Sigmoid colon (tissue), 7 donors: ENCODE measurements at regions of chr1 and their contacts with region 1.

Region 1: GRCh38 chr1:186212544-186213226 is 162.4 kb downstream of the TPR start:
- DNase-seq: peak; percentile 69
- H3K4me3 ChIP-seq: no peak overlapping the region
- H3K27ac ChIP-seq: no peak overlapping the region
- H3K4me1 ChIP-seq: peaks cover 0 to 13% (median 4%) of the 10 kb centered on the region in 4 donors
- H3K27me3 ChIP-seq: no peaks in the 10 kb centered on the region
- CTCF ChIP-seq: peak; percentile 51 to 73 (median 70)
- EP300 ChIP-seq: no peak
- POLR2A ChIP-seq: no peak

Region 2: DNA sequence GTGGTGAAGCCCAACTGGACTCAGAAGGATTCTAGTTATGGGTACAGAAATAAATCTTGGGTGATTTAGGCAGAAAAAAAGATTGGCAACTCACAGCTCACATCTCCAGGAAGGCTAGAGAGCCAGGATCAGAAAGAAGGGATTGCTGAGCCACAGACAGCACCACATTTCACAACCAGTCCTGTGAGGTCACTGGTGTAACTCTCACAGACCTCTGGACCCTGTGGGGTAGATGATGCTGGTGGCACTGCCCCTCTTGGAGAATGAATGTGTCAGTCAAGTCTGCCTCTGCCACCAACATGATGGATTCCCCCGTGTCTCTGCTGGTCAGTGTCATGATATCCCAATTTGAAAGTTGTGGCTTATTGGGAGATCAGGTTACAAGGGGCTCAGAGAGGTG is 549.4 kb before region 1 on chr1:
- intact Hi-C with region 1: no loop called
- DNase-seq: no peak
- H3K4me3 ChIP-seq: no peak overlapping the region
- H3K27ac ChIP-seq: no peak overlapping the region
- H3K4me1 ChIP-seq: no peaks in the 10 kb centered on the region
- H3K27me3 ChIP-seq: no peaks in the 10 kb centered on the region
- CTCF ChIP-seq: no peak
- EP300 ChIP-seq: no peak
- POLR2A ChIP-seq: no peak

Region 3: DNA sequence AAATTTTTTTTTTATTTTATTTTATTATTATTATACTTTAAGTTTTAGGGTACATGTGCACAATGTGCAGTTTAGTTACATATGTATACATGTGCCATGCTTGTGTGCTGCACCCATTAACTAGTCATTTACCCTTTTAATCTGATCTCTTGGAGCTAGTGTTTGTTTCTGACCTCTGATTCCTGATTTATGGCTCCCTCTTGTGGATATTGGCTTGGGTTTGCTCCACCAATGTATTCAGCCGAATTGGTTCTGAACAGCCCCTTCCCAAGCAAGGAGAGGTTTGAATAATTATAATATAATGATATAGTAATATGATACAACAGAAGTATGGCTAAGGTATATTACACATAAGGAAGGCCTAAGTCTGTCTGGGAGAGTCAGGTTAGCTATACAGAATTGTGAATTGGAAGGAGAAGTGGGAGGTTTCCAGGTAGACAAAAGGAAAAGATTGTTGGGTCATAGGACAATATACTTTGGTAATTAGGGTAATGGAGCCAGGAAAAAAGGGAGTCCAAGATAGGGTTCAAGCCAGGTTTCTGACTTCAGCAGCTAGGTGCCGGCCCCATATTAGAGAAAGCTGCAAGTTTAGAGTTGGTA is 531.6 kb before region 1 on chr1:
- intact Hi-C with region 1: no loop called
- DNase-seq: no peak
- H3K4me3 ChIP-seq: no peak overlapping the region
- H3K27ac ChIP-seq: no peak overlapping the region
- H3K4me1 ChIP-seq: no peaks in the 10 kb centered on the region
- H3K27me3 ChIP-seq: no peaks in the 10 kb centered on the region
- CTCF ChIP-seq: peak in 1 of 4 experiments; percentile 23
- EP300 ChIP-seq: no peak
- POLR2A ChIP-seq: no peak

Region 4: DNA sequence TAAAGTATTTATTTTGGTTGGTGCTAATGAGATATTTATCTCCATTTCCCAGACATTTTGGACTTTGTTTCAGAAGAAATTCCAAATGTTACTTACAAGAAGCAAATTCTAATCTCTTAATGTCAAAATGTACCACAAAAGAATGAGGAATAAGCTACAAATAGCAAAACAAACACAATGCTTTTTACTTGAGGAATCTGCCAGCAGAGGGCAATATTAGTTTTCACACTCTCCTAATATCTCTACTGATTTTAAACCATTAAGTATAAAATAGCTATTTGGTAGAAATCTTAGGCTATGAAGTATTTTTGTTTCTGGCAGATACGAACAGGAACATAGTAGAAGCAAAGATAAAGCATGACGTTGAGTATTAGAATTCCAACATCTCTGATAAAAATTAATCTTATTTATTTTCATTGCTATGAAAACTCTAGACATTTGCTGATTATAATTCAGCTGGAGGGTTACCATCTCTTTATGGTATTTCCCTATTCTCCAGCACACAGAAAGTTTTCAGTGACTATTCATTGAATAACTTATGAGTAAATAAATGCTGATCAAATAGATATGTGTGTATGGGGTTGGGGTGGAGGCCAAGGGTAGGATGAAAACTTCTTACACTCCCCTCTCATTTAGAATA is 491.9 kb before region 1 on chr1:
- intact Hi-C with region 1: loop called (anchors 2 kb)
- DNase-seq: no peak
- H3K4me3 ChIP-seq: no peak overlapping the region
- H3K27ac ChIP-seq: no peak overlapping the region
- H3K4me1 ChIP-seq: no peaks in the 10 kb centered on the region
- H3K27me3 ChIP-seq: no peaks in the 10 kb centered on the region
- CTCF ChIP-seq: peak in 3 of 4 experiments; percentile 23 to 50 (median 44)
- EP300 ChIP-seq: no peak
- POLR2A ChIP-seq: no peak

Region 5: DNA sequence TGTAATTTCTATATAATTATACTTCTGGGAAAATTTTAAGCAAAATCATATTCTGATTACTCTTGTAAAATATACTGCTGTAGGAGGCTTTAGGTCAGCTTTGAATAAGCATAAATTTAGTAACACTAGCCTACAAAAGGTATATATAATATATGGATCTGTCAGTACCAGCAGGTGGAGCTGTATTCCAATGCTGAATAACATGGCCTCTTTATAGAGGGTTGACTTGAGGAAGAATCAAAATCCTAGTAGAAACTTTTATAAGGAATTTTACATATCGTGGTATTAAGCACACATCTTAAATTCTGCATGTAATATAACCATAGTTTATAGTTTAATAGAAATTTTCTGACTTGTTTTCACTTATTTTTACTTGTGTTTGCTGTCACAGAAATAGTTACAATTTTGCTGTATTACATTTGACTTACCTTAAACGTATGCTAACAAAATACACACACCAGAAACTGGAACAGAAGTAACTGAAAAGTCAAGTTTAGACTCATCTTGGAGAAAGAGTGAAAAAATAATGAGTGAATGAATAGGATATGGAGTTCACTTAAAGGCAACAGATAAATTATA is 399.2 kb before region 1 on chr1:
- intact Hi-C with region 1: loop called (anchors 5 kb)
- DNase-seq: no peak
- H3K4me3 ChIP-seq: no peak overlapping the region
- H3K27ac ChIP-seq: no peak overlapping the region
- H3K4me1 ChIP-seq: no peaks in the 10 kb centered on the region
- H3K27me3 ChIP-seq: no peaks in the 10 kb centered on the region
- CTCF ChIP-seq: peak in 2 of 4 experiments; percentile 24 to 30
- EP300 ChIP-seq: no peak
- POLR2A ChIP-seq: no peak

Region 6: DNA sequence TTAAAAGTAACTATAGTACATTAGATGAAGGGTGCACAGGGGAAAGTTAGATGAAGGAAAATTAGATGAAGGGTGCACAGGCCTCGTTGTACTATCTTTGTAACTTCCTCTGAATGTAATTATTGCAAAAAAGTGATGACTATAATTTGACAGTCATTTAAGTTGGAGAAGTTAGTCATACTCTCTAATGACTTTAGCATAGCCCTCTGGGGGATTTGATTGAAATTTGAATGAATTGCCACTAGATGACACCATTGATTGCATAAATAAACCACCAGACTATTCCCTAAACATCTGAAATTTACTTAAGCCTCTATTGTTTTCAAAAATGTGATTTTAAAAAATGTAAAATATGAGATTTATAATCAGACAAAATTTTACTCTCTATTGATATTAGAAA is 59.8 kb after region 1 on chr1:
- intact Hi-C with region 1: no loop called
- DNase-seq: no peak
- H3K4me3 ChIP-seq: no peak overlapping the region
- H3K27ac ChIP-seq: no peak overlapping the region
- H3K4me1 ChIP-seq: no peaks in the 10 kb centered on the region
- H3K27me3 ChIP-seq: no peaks in the 10 kb centered on the region
- CTCF ChIP-seq: no peak
- EP300 ChIP-seq: no peak
- POLR2A ChIP-seq: no peak

Region 7: DNA sequence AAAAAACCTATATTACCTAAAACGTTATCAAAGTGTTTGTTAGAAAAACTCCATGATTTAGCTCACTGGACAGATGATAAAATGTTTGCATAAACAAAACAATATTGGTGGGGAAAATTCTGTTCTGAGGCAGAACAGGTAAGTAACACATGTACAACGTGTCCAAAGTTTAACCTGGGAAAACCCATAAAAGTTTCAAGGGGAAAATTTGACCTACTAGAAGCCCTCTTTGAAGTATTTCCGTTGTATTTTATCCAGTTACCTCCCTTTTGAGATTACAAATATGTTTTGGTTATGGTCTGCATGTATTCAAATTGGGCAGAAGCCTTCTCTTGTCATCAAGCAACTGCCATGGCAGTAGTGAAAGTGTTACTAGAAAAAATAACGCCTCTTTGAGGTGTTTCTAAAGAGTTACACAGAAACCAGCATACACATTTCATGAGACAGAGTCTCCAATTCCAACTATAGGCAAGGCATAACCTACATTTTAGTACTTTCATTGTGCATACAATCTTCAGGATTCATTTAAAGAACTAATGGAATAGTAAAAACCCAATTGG is 306.2 kb after region 1 on chr1:
- intact Hi-C with region 1: no loop called
- DNase-seq: no peak
- H3K4me3 ChIP-seq: no peak overlapping the region
- H3K27ac ChIP-seq: no peak overlapping the region
- H3K4me1 ChIP-seq: no peaks in the 10 kb centered on the region
- H3K27me3 ChIP-seq: no peaks in the 10 kb centered on the region
- CTCF ChIP-seq: no peak
- EP300 ChIP-seq: no peak
- POLR2A ChIP-seq: no peak